Activated naive CD4-positive, alpha-beta T cell treated with anti-CD3 and anti-CD28 coated beads for 36 hours (primary cell): ENCODE measurements at regions of chr19 and their contacts with region 1.

Region 1: DNA sequence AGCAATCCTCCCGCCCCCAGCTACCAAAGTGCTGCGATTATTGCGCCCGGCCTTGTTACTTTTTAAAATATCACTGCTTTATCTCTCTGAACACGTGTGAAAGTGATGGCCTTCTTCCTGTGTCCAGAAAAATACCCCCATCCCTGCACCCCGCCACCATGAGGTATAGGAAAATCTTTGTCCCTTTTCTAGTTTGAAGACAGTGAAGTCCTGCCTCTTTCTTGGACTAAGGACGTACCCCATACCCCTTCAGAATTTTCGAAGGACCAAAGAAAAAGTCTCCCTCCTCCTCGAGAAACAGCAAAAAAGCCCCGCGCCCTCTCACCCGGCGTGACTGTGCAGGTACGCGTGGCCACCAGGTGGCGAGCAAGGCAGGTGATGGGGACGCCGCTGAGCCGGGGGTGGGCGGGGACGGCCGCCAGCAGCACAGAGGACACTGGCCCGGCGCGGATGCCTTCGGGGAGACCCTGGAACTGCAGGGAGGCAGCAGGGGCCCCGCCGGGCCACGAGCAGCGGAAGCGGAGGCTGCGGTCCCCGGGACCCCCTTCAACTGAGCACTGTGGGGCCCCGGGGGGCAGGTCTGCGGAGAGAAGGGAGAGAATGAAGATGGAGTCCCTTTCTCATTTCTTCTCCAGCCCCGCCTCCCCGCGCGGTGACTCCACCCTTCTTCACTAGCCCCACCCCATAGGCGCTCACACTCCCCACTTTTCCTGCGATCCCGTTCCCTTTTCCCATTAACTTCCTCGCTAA is 3.2 kb downstream of the VSIG10L start:
- DNase-seq: peak; percentile 91
- H3K4me3 Mint-ChIP-seq: peak overlapping the region; percentile 83
- H3K27ac Mint-ChIP-seq: peak overlapping the region; percentile 46
- H3K4me1 Mint-ChIP-seq: peaks cover 13% of the 10 kb centered on the region
- H3K27me3 Mint-ChIP-seq: no peaks in the 10 kb centered on the region

Region 2: DNA sequence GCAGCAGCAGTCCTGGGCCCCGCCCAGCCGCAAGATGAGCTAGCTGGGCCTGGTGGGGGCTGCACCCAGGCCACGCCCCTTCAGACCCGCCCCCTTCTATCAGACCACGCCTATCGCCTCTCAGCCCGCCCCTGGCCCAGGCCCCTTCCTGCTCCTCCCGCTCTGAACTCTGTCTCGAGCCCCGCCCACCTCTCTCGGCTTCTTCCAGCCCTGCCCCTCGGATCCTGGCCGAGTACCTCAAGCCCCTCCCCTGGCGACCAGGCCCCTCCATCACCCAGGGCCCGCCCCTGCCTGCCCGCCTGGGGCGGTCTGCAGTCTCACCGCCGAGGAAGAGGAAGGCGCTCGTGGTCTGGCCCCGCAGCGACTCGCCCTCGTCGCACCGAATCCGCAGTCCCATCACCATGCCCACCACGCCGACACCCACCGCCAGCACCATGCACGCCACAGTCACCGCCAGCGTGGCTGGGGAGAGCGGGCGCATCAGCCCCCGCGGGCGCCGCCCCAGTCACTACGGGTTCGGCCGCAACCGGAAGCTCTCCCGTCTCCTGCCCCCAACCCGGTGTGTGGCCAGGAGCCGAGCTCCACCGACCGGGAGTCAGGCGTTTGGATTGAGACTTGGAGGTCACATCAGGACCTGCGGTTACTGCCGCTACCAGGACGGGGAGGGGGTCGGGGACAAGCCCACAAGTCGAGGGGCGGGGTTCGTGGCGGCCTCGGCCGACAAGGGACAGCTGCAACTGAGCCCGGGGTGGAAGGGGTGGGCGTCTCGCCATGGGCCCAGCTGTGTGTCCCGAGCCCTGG is 29.0 kb after region 1 on chr19:
- CTCF ChIA-PET with region 1: interaction called, 5 read pairs
- intact Hi-C with region 1: loop called (anchors 1 kb)
- DNase-seq: peak; percentile 99
- H3K4me3 Mint-ChIP-seq: peak overlapping the region; percentile 94
- H3K27ac Mint-ChIP-seq: peak overlapping the region; percentile 95
- H3K4me1 Mint-ChIP-seq: peaks cover 58% of the 10 kb centered on the region
- H3K27me3 Mint-ChIP-seq: no peaks in the 10 kb centered on the region

Region 3: GRCh38 chr19:51407511-51408131 is 68.9 kb after region 1 on chr19:
- CTCF ChIA-PET with region 1: interaction called, 5 read pairs
- intact Hi-C with region 1: loop called (anchors 1 kb)
- DNase-seq: peak; percentile 56
- H3K4me3 Mint-ChIP-seq: no peak overlapping the region
- H3K27ac Mint-ChIP-seq: no peak overlapping the region
- H3K4me1 Mint-ChIP-seq: no peaks in the 10 kb centered on the region
- H3K27me3 Mint-ChIP-seq: peaks cover 15% of the 10 kb centered on the region

Region 4: DNA sequence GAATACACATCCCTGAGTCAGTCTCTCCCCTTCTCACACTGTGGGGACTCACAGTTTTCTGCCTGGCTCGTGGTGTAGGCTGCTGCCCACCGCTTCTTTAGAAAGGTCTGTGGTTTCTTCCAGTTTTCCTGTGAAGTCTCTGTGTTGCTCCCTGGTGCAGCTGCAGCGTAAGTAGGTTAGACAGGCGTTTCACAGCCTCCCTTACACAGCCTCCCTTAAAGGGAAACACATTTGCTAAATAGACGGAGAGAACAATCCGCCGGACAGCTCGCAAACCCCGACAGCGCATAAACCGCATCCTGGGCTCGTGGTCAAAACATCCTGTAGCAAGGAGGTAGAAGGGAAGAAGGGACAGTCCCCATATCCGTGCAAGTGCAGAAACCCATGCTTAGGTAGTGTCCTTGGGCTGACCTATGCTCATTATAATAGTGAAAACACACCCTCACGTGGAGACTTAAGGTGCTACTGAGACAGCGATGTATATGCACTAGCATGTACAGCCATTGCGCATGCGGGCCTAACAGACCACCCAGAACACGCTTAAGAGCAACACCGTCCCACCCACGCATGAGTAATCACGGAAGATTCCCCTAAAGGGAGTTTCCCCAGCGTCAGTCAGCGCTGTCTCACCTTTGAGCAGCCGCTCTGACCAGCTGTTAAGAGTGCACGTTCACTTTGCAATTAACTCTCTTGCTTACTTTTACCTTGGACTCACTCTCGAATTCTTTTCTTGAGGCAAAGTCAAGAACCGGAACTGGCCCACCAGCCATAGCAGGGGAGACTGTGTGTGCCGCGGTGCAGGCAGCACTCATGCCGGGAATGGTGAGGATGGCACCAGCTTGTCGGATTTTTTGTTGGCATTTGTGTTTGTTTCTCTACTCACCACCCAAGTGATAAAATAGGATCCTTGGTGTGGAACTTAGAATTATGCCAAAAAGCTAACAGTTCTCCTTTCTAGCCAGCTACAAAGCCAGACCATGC is 103.0 kb after region 1 on chr19:
- CTCF ChIA-PET with region 1: interaction called, 7 read pairs
- intact Hi-C with region 1: loop called (anchors 1 kb)
- DNase-seq: peak; percentile 95
- H3K4me3 Mint-ChIP-seq: peak overlapping the region; percentile 62
- H3K27ac Mint-ChIP-seq: peak overlapping the region; percentile 87
- H3K4me1 Mint-ChIP-seq: peaks cover 43% of the 10 kb centered on the region
- H3K27me3 Mint-ChIP-seq: peaks cover 4% of the 10 kb centered on the region

Region 5: DNA sequence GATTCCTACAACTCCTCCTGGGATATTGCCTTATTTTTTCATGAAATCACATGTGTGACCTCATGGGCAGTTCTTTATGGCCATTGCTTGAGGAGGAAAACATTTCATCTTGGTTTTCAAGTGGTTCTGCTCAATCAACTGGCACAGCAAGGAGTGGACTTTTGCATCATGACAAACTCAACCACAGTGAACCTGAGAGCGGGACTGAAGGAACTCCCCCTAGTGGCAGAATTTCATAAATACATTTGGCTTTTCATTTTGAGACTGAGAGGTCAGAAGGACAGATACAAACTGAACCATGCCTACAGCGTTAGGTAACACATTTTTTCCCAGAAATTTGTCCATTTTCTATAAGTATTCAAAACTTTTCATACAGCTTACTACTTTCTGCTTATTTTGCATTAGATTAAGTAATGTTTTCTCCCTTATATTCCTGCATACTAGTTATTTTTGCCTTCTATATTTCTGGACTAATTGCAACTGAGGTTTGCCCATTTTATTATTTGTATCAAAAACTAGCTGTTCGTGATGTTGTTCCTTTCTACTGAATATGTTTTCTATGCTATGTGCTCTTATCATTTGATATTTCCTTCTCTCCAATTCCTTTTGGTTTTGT is 176.2 kb after region 1 on chr19:
- CTCF ChIA-PET with region 1: no interaction called
- intact Hi-C with region 1: loop called (anchors 5 kb)
- DNase-seq: peak; percentile 31
- H3K4me3 Mint-ChIP-seq: no peak overlapping the region
- H3K27ac Mint-ChIP-seq: no peak overlapping the region
- H3K4me1 Mint-ChIP-seq: no peaks in the 10 kb centered on the region
- H3K27me3 Mint-ChIP-seq: peaks cover 15% of the 10 kb centered on the region

Region 6: DNA sequence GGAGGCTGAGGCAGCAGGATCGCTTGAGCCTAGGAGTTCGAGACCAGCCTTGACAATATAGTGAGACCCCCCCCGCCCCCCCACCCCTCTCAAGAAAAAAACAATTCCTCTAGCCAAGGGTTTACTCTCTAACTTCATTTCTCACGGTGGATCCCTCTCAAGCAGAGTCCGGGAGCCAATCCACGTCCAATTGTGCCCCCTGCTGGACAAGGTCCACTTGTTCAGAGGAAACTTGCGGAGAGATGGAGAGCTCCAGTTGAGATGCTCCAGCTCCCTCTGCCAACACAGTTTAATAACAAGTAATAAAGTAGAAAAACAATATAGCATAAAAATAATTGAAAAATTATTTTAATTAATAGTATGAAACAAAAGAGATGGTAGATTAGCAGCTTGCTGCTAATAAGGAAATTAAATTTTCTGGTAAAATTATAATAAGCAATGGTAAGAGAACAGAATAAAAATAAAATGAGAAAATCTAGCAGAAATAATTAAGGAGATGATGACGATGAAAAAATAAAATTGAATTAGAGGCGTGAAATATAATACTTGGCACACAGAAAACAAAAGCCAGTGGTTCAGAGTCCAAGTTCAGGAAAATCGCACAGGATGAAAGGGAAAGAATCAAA is 322.4 kb after region 1 on chr19:
- CTCF ChIA-PET with region 1: no interaction called
- intact Hi-C with region 1: loop called (anchors 1 kb)
- DNase-seq: peak; percentile 89
- H3K4me3 Mint-ChIP-seq: no peak overlapping the region
- H3K27ac Mint-ChIP-seq: no peak overlapping the region
- H3K4me1 Mint-ChIP-seq: peaks cover 5% of the 10 kb centered on the region
- H3K27me3 Mint-ChIP-seq: peaks cover 19% of the 10 kb centered on the region